ENCODE measurements at regions of chr7 and their contacts with region 1.

Region 1: DNA sequence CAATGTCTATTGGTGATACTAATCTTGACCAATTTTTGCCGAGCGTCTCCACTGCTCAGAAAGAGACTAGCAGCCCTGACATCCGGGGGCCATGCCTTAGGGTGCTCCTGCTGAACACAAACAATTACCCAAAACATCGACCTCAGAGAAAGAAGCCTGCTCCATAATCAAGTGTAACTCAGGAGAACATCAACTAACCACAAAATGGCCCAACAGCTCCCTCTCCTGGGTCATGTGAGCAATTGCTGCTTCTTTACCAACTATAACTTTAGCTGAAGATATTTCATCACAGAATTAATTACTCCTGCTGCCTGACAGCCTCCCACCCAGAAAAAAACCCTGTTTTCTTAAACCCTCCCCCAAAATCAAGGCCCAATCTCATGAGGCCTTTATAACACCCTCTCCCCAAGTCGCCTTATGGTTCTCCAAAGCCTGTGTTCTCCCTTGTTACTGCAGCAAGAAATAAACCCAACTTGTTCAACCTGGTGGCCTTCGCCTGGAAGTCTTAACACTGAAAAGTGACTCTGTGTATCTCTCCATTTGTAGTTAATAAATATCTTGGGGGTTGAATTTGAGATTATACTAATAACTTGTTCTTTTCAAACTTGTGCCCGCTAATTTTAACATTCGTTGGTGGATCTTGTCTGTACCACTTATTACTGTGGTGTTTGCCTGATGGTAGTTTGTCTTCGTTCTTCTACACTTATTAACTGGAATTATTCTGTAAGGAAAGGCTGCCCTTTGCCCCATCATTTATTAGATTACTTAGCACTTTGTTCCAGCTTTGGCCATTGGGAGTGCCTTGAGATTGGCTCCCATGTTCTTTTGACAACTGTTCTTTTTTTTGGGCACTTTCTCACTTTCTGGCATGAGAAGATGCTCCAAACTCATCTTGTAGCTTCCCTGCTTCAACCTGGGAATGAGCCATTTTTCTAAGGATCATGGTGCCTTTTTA is 21.2 kb upstream of the RAMP3 start:
- H3K4me3 ChIP-seq: no peak overlapping the region
- H3K27ac ChIP-seq: no peak overlapping the region
- H3K4me1 ChIP-seq: no peaks in the 10 kb centered on the region
- CTCF ChIP-seq: peak; percentile 61

Region 2: GRCh38 chr7:44973610-44974401 is 162.6 kb before region 1 on chr7:
- CTCF ChIA-PET with region 1: interaction called, 159 read pairs
- POLR2A ChIA-PET with region 1: interaction called, 13 read pairs
- H3K4me3 ChIP-seq: no peak overlapping the region
- H3K27ac ChIP-seq: no peak overlapping the region
- H3K4me1 ChIP-seq: no peaks in the 10 kb centered on the region
- CTCF ChIP-seq: no peak

Region 3: DNA sequence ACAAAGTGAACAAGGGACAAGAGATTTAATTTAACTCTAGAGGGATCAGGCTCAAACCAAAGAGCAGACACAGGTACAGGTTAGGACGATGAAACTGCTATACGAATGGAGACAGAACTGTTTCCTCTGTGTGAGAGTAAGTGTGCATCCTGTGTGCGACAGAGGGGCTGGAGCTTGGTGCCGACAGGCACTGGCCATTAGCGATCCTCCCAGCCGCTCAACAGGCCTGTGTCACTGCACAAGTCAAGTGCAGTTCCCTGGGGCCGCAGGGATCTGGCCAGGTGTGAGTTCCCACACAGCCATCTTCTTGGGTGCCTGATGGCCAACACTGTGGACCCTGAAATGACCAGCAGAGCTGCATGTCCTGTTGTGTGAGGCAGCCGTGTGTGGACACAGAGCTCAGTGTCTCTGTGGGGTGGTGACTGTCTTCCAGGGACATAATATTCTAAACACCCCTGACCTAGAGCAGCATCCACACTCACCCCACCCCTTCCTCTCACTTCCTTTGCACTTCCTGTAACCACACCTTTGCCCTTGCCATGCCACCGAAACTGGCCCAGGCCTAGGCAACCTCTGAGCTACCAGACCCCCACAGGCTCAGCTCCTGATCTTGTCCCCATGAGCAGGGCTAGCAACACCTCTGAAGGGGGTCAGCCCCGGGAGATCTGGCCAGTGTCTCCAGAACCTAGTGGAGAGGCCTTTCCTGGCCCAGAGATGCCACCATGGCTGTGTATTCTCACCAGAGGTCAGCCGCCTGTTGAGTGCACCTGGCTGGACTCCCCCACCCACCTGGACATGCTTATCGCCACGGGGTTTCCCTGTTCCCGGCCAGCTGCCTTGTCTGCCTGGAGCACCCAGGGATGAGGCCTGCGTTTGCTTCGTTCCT is 13.2 kb before region 1 on chr7:
- CTCF ChIA-PET with region 1: interaction called, 11 read pairs
- POLR2A ChIA-PET with region 1: no interaction called
- H3K4me3 ChIP-seq: no peak overlapping the region
- H3K27ac ChIP-seq: no peak overlapping the region
- H3K4me1 ChIP-seq: no peaks in the 10 kb centered on the region
- CTCF ChIP-seq: no peak

Region 4: DNA sequence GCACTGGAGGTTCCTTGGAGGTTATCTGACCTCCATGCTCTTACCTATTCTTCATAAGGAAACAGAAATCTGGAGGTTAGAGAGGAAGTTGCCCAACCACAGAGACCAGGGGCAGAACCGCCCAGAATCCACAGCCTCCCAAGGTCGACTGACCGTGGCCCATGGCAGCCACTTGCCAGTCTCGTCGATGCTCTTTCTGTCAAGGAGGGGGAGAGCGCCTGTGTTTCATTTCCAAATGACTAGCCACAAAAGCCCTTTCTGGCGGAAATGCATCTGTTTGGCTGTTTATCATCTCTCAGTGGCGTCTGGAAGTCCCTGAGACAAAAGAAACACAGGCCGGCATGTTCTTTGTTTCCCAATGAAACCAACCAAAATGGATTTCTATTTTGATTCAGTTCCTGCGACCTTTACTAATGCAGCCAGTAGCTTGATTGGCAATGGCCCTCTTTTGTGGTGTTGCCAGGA is 24.1 kb after region 1 on chr7:
- CTCF ChIA-PET with region 1: no interaction called
- POLR2A ChIA-PET with region 1: no interaction called
- H3K4me3 ChIP-seq: no peak overlapping the region
- H3K27ac ChIP-seq: no peak overlapping the region
- H3K4me1 ChIP-seq: no peaks in the 10 kb centered on the region
- CTCF ChIP-seq: no peak

Region 5: GRCh38 chr7:45178241-45179225 is 42.1 kb after region 1 on chr7:
- CTCF ChIA-PET with region 1: no interaction called
- POLR2A ChIA-PET with region 1: no interaction called
- H3K4me3 ChIP-seq: no peak overlapping the region
- H3K27ac ChIP-seq: no peak overlapping the region
- H3K4me1 ChIP-seq: no peaks in the 10 kb centered on the region
- CTCF ChIP-seq: 0 out of 2 replicates have a peak, but pooled peaks have one; percentile 25